K562 (cell line): ENCODE measurements at regions of chr11 and their contacts with region 1.

Region 1: DNA sequence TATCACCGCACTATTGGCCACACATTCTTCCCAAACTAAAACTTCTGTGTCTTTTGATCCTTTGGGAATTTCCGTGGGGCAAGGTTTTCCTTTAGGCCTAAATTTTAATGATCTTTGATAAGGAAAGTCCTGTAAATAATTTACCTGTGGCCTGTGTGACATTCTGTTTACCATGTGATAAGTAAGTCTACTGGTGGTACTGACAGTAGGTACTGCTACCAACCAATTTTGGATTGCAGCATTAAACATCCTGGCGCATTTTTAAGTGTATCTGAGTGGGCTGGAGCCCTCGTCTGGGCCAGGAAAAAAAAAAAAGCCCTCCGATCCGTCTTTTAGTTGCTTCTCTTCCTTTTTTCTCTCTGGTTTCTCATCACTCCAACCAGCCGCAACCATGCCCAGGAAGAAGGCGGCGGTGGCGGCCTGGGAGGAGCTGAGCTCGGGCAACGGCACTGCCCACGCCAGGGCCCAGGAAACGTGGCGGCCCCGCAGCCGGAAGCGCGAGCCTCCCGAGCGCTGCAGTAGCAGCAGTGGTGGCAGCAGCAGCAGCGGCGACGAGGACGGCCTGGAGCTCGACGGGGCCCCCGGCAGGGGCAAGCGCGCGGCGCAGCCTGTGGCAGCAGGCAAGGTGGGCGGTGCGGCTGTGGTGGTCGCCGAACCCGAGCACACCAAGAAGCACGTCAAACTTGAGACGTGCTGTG is 33.6 kb downstream of the ASRGL1 start:
- DNase-seq: no peak
- ATAC-seq: no peak
- H3K4me3 ChIP-seq: no peak overlapping the region
- H3K27ac ChIP-seq: no peak overlapping the region
- H3K4me1 ChIP-seq: peaks cover 14% of the 10 kb centered on the region in 2 experiments; a peak in 4 of 5 replicates
- H3K27me3 ChIP-seq: no peaks in the 10 kb centered on the region
- CTCF ChIP-seq: no peak
- EP300 ChIP-seq: no peak
- POLR2A ChIP-seq: no peak
- RAD21 ChIP-seq: no peak

Region 2: DNA sequence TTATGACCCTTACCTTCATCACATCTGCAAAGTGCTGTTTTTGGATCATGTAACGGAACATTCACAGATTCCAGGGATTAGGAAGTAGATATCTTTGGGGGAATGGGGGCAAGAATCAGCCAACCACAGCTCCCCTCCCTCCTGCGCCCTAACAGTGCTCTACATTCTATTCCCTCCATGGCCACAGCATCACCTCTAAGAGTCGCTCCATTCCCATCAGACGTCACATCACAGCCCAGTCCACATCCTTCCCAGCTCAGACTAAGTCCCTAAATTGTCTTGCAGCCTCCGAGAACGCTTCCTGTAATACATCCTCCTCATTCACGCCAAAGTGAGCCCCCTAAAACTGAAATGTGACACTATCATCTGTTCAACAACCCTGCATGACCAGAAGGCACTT is 174.9 kb before region 1 on chr11:
- CTCF ChIA-PET with region 1: no interaction called
- POLR2A ChIA-PET with region 1: no interaction called
- in situ Hi-C with region 1: no loop called
- intact Hi-C with region 1: loop called (anchors 5 kb)
- DNase-seq: peak; percentile 30 to 39 (median 34)
- ATAC-seq: peak; percentile 95
- H3K4me3 ChIP-seq: no peak overlapping the region
- H3K27ac ChIP-seq: no peak overlapping the region
- H3K4me1 ChIP-seq: no peaks in the 10 kb centered on the region; a peak in 1 of 5 replicates
- H3K27me3 ChIP-seq: peaks cover 9 to 34% of the 10 kb centered on the region in 2 experiments; a peak in 4 of 5 replicates
- CTCF ChIP-seq: peak; percentile 66 to 73 (median 69)
- EP300 ChIP-seq: no peak
- POLR2A ChIP-seq: no peak
- RAD21 ChIP-seq: peak in 1 of 2 experiments; percentile 56; a peak in 3 of 4 replicates

Region 3: GRCh38 chr11:62324738-62325556 is 45.9 kb before region 1 on chr11:
- CTCF ChIA-PET with region 1: no interaction called
- POLR2A ChIA-PET with region 1: no interaction called
- in situ Hi-C with region 1: no loop called
- intact Hi-C with region 1: loop called (anchors 10 kb)
- DNase-seq: peak; percentile 79 to 85 (median 80)
- ATAC-seq: peak; percentile 100
- H3K4me3 ChIP-seq: no peak overlapping the region
- H3K27ac ChIP-seq: no peak overlapping the region
- H3K4me1 ChIP-seq: no peaks in the 10 kb centered on the region; a peak in 1 of 5 replicates
- H3K27me3 ChIP-seq: peaks cover 12 to 18% of the 10 kb centered on the region in 2 experiments; a peak in 4 of 5 replicates
- CTCF ChIP-seq: peak; percentile 98 to 100 (median 99)
- EP300 ChIP-seq: no peak
- POLR2A ChIP-seq: no peak
- RAD21 ChIP-seq: peak; percentile 86 to 95

Region 4: DNA sequence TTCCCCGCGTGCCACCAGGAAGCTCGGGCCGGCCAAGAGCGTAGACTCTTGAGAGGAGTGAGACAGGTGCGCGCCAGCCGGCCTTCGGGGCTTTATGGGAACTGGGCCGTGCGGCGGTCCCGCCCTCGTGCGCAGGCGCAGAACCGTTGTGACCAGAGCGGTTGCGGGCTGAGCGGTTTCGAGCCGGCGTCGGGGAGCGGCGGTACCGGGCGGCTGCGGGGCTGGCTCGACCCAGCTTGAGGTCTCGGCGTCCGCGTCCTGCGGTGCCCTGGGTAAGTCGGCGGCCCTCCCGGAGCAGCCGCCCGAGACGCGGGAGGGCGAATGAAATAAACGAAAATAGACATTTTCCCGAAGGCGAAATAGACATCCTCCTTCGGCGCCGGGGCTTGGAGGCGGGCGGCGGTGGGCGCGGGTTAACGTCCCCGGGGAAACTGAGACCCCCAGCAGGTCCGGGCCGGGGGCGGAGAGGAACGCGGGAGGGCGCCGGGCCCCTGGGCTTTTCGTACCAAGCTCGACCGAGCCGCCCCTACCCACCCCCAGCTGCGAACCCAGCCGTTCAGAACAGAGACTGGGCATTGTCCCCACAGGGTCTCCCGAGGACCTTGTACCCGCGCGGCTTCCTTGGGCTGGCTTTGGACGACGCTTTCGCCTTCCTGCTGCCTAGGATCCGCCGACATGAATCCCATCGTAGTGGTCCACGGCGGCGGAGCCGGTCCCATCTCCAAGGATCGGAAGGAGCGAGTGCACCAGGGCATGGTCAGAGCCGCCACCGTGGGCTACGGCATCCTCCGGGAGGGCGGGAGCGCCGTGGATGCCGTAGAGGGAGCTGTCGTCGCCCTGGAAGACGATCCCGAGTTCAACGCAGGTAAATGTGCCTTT is 33.4 kb before region 1 on chr11 and contains the start of gene ASRGL1:
- CTCF ChIA-PET with region 1: no interaction called
- POLR2A ChIA-PET with region 1: interaction called, 4 read pairs
- in situ Hi-C with region 1: loop called (anchors 5 kb)
- intact Hi-C with region 1: no loop called
- DNase-seq: peak; percentile 89 to 94 (median 90)
- ATAC-seq: peak; percentile 96
- H3K4me3 ChIP-seq: peak within 1 kb of the TSS; percentile 54
- H3K27ac ChIP-seq: no peak within 1 kb of the TSS
- H3K4me1 ChIP-seq: peaks cover 4 to 23% of the 10 kb centered on the region in 2 experiments; a peak in 4 of 5 replicates
- H3K27me3 ChIP-seq: peaks cover 6 to 11% of the 10 kb centered on the region in 2 experiments; a peak in 4 of 5 replicates
- CTCF ChIP-seq: no peak; a peak in 1 of 6 replicates
- EP300 ChIP-seq: no peak
- POLR2A ChIP-seq: peak; percentile 63
- RAD21 ChIP-seq: no peak
- polyA plus RNA-seq, gene ASRGL1: 3.1 to 4.3 TPM

Region 5: GRCh38 chr11:62353844-62354243 is 17.0 kb before region 1 on chr11:
- CTCF ChIA-PET with region 1: no interaction called
- POLR2A ChIA-PET with region 1: no interaction called
- in situ Hi-C with region 1: no loop called
- intact Hi-C with region 1: no loop called
- DNase-seq: no peak
- ATAC-seq: no peak
- H3K4me3 ChIP-seq: no peak overlapping the region
- H3K27ac ChIP-seq: no peak overlapping the region
- H3K4me1 ChIP-seq: peaks cover 2 to 6% of the 10 kb centered on the region in 2 experiments; a peak in 1 of 5 replicates
- H3K27me3 ChIP-seq: no peaks in the 10 kb centered on the region
- CTCF ChIP-seq: no peak
- EP300 ChIP-seq: no peak
- POLR2A ChIP-seq: no peak
- RAD21 ChIP-seq: no peak